Activated CD8-positive, alpha-beta T cell treated with anti-CD3 and anti-CD28 coated beads for 36 hours (primary cell): ENCODE measurements at regions of chr4 and their contacts with region 1.

Region 1: GRCh38 chr4:25993395-25994185 is 79.6 kb downstream of the SMIM20 start:
- DNase-seq: peak; percentile 60
- ATAC-seq: peak; percentile 90
- H3K4me3 Mint-ChIP-seq: no peak overlapping the region
- H3K27ac Mint-ChIP-seq: no peak overlapping the region
- H3K4me1 Mint-ChIP-seq: peaks cover 10% of the 10 kb centered on the region
- H3K27me3 Mint-ChIP-seq: peaks cover 3% of the 10 kb centered on the region
- CTCF ChIP-seq: peak; percentile 43

Region 2: DNA sequence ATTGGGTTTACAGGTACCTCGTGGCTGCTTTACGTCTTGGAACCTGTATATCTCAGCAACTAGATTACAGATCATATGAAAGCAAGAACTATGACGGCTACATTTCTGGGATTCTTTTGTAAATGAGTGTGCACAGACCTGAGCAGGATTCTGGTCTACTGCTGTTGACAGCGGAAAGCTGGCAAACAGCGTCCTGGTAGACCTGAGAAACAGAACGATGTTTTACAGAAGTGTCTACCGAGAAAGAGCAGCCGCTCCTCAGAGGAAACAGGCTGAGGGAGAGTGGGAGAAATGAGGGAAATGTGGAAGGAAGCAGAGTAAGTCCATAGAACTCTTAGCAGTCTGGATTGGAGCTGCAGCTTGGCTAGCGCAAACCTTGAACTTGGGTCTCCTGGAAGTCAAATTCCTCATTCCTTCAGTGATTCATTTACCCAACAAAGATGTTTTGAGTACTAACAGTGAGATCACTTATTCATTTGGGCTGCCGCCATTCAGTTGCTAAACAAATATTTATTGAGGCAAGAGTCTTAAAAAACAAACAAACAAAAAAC is 182.4 kb before region 1 on chr4:
- CTCF ChIA-PET with region 1: no interaction called
- POLR2A ChIA-PET with region 1: no interaction called
- intact Hi-C with region 1: no loop called
- DNase-seq: no peak
- ATAC-seq: no peak
- H3K4me3 Mint-ChIP-seq: no peak overlapping the region
- H3K27ac Mint-ChIP-seq: no peak overlapping the region
- H3K4me1 Mint-ChIP-seq: no peaks in the 10 kb centered on the region
- H3K27me3 Mint-ChIP-seq: no peaks in the 10 kb centered on the region
- CTCF ChIP-seq: no peak

Region 3: GRCh38 chr4:25925486-25926201 is 67.9 kb before region 1 on chr4:
- CTCF ChIA-PET with region 1: interaction called, 21 read pairs
- POLR2A ChIA-PET with region 1: no interaction called
- intact Hi-C with region 1: no loop called
- DNase-seq: peak; percentile 50
- ATAC-seq: peak; percentile 61
- H3K4me3 Mint-ChIP-seq: no peak overlapping the region
- H3K27ac Mint-ChIP-seq: no peak overlapping the region
- H3K4me1 Mint-ChIP-seq: peaks cover 8% of the 10 kb centered on the region
- H3K27me3 Mint-ChIP-seq: no peaks in the 10 kb centered on the region
- CTCF ChIP-seq: peak; percentile 48

Region 4: GRCh38 chr4:26005764-26006163 is 12.2 kb after region 1 on chr4:
- CTCF ChIA-PET with region 1: interaction called, 28 read pairs
- POLR2A ChIA-PET with region 1: interaction called, 9 read pairs
- intact Hi-C with region 1: no loop called
- DNase-seq: no peak
- ATAC-seq: no peak
- H3K4me3 Mint-ChIP-seq: no peak overlapping the region
- H3K27ac Mint-ChIP-seq: no peak overlapping the region
- H3K4me1 Mint-ChIP-seq: no peaks in the 10 kb centered on the region
- H3K27me3 Mint-ChIP-seq: peaks cover 9% of the 10 kb centered on the region
- CTCF ChIP-seq: no peak

Region 5: GRCh38 chr4:26028793-26029567 is 35.4 kb after region 1 on chr4:
- CTCF ChIA-PET with region 1: interaction called, 18 read pairs
- POLR2A ChIA-PET with region 1: no interaction called
- intact Hi-C with region 1: no loop called
- DNase-seq: peak; percentile 74
- ATAC-seq: peak; percentile 99
- H3K4me3 Mint-ChIP-seq: no peak overlapping the region
- H3K27ac Mint-ChIP-seq: no peak overlapping the region
- H3K4me1 Mint-ChIP-seq: peaks cover 9% of the 10 kb centered on the region
- H3K27me3 Mint-ChIP-seq: peaks cover 18% of the 10 kb centered on the region
- CTCF ChIP-seq: peak; percentile 80

Region 6: GRCh38 chr4:26104056-26104685 is 110.6 kb after region 1 on chr4:
- CTCF ChIA-PET with region 1: interaction called, 10 read pairs
- POLR2A ChIA-PET with region 1: no interaction called
- intact Hi-C with region 1: no loop called
- DNase-seq: no peak
- ATAC-seq: peak; percentile 47
- H3K4me3 Mint-ChIP-seq: no peak overlapping the region
- H3K27ac Mint-ChIP-seq: no peak overlapping the region
- H3K4me1 Mint-ChIP-seq: peaks cover 9% of the 10 kb centered on the region
- H3K27me3 Mint-ChIP-seq: peaks cover 22% of the 10 kb centered on the region
- CTCF ChIP-seq: no peak

Region 7: DNA sequence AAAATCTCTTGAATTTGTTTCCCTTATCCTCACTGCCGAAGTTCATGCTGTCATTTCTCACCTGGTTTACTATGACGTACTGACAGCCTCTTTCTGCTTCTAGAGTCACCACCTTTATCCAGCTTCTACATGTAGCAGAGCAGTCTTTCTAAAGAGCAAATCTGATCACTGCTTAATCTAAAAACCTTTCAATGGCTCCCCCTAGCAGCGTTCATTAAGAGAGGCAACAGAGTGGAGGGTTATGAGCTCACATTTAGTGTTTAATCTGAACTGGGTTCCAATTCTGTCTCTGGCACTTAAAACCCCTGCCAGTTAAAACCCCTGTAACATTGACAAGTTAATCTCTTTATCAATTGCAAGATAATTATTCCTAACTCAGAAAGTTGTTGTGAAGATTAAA is 331.6 kb after region 1 on chr4:
- CTCF ChIA-PET with region 1: interaction called, 23 read pairs
- POLR2A ChIA-PET with region 1: no interaction called
- intact Hi-C with region 1: no loop called
- DNase-seq: peak; percentile 36
- ATAC-seq: peak; percentile 28
- H3K4me3 Mint-ChIP-seq: peak overlapping the region; percentile 40
- H3K27ac Mint-ChIP-seq: peak overlapping the region; percentile 22
- H3K4me1 Mint-ChIP-seq: peaks cover 40% of the 10 kb centered on the region
- H3K27me3 Mint-ChIP-seq: no peaks in the 10 kb centered on the region
- CTCF ChIP-seq: peak; percentile 63